Activated CD4-positive, alpha-beta memory T cell treated with anti-CD3 and anti-CD28 coated beads, Interleukin-2, amount 10 ng/mL, durations not matched to agents 7 days and 5 days (primary cell): ENCODE measurements at regions of chr5 and their contacts with region 1.

Region 1: GRCh38 chr5:43066799-43067741 is 27.0 kb upstream of the ANXA2R start:
- DNase-seq: peak; percentile 90
- H3K4me3 Mint-ChIP-seq: peak overlapping the region; percentile 97
- H3K27ac Mint-ChIP-seq: peak overlapping the region; percentile 100
- H3K4me1 Mint-ChIP-seq: peaks cover 47% of the 10 kb centered on the region
- H3K27me3 Mint-ChIP-seq: no peaks in the 10 kb centered on the region

Region 2: DNA sequence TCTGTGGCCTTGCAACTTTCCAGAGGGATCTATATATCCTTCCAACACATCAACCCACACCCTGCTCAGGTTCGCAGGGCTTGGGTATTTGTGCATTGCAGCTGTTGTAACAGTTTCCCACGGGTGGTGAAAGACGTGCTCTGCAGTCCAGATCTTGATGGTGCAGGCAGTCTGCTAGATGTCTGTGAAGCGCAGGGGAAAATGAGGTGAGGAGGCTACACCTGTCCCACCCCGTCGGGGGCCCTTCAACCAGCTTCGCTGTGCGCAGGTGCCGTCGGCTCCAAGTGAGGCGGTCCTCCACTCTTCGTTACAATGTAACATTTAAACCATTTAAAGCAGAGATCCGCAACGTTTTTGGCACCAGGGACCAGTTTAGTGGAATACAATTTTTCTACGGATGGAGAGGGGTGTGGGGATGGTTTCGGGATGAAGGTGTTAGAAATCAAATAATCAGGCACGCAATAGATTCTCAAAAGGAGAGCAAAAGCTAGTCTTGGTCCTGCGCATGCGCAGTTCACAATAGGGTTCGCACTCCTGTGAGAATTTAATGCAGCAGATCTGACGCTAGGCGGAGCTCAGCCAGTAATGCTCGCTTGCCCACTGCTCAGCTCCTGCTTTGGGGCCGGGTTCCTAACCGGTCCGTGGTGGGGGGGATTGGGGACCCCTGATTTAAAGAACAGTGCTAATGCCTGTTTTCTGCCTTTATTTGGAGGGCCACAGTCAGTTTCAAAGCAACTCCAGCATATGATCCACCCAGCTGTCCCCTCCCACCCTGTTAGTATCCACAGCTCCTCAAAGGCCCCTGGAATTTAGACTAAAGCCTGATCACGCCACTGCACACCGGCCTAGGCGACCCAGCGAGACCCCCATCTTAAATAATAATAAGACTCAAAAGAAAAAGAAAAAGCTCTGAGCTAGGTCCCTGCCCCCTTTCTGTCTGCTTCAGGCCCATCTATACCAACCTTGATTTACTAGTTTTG is 158.3 kb before region 1 on chr5:
- CTCF ChIA-PET with region 1: interaction called, 6 read pairs
- POLR2A ChIA-PET with region 1: interaction called, 19 read pairs
- DNase-seq: peak; percentile 91
- H3K4me3 Mint-ChIP-seq: peak overlapping the region; percentile 86
- H3K27ac Mint-ChIP-seq: peak overlapping the region; percentile 51
- H3K4me1 Mint-ChIP-seq: peaks cover 16% of the 10 kb centered on the region
- H3K27me3 Mint-ChIP-seq: peaks cover 33% of the 10 kb centered on the region

Region 3: DNA sequence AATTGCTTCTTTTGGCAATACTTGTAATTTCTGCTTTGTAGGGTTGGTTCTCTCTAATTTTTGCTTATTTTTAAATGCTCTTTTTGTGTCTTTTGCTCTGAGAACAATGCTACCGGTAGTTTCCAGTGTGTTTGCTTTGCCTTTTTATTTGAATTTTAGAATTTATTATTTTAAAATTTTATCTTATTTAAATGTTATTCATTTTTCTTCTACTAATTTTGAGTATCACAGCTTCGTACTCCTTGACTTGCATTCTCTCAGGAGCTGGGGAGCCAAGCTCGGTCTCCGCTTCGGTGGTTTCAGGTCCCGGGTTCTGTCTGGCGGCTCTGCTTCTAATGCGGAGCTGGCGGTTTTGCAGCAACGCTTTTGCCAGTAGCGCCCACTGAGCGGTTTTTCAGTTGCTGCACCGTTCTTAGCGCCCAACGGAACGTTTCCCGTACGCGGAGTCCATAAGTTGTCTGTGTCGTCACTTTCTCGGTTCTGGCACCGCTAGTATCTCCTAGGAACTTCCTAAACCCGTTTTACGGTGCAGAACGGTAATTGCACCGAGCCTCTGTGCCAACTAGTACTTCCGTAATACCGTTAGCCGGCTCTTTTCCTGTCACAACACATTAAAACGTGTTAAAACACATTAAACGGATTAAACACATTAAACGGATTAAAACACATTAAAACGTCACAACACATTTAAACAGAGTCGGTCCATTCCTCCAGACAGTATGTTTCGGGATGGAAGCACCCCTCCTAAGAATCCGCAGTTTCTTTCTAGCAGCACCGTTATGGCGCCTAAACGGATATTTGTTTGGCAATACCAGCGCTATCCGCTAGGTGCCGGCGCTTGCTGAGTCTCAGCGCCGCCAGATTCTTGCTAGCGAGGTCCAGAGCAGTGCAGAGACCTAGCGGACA is 72.6 kb before region 1 on chr5:
- CTCF ChIA-PET with region 1: interaction called, 11 read pairs
- POLR2A ChIA-PET with region 1: interaction called, 197 read pairs
- DNase-seq: peak; percentile 91
- H3K4me3 Mint-ChIP-seq: peak overlapping the region; percentile 99
- H3K27ac Mint-ChIP-seq: peak overlapping the region; percentile 100
- H3K4me1 Mint-ChIP-seq: peaks cover 25% of the 10 kb centered on the region
- H3K27me3 Mint-ChIP-seq: no peaks in the 10 kb centered on the region

Region 4: DNA sequence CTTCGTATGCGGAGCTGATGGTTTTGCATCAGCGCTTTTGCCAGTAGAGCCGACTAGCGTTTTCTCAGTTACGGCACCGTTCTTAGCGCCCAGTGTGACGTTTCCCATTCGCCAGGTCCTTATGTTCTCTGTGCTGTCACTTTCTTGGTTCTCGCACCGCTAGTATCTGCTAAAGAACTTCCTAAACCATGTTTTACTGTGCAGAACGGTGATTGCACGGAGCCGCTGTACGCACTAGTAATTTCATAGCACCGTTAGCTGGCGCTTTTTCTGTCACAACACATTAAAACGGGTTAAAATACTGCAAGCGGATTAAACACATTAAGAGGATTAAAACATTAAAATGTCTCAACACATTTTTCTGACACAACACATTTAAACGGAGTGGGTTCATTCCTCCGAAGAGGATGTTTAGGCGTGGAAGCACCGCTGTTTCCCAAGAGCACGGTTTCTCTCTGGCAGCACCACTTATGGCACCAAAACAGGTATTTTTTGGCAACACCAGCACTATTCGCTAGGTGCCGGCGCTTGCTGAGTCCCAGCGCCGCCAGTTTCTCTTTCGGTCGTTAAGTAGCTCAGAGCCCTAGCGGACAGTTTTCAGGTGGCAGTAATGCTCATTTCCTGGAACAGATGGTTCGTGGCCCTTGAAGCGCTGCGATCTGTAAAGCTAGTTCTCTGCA is 47.3 kb before region 1 on chr5:
- CTCF ChIA-PET with region 1: interaction called, 28 read pairs
- POLR2A ChIA-PET with region 1: interaction called, 158 read pairs
- DNase-seq: peak; percentile 90
- H3K4me3 Mint-ChIP-seq: peak overlapping the region; percentile 93
- H3K27ac Mint-ChIP-seq: peak overlapping the region; percentile 99
- H3K4me1 Mint-ChIP-seq: peaks cover 42% of the 10 kb centered on the region
- H3K27me3 Mint-ChIP-seq: no peaks in the 10 kb centered on the region

Region 5: DNA sequence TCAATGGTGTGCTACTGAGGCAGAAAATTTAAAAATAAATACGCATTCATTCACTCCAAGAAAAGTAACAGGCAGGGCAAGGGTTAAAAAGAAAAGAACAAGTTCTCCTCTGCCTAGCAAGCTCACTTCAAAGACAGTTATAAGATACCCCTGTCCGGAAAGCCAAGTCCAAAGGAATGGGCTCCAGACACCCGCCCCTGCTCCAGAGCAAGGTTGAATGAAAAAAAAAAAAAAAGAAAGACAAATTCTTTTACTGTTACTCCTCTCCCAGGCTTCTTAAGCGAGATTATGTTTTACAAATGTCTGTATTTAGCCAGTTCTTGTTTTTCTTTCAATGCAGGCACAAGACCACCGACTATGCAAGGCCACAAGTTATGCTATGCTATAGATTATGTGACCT is 17.8 kb before region 1 on chr5:
- CTCF ChIA-PET with region 1: interaction called, 76 read pairs
- POLR2A ChIA-PET with region 1: interaction called, 26 read pairs
- DNase-seq: no peak
- H3K4me3 Mint-ChIP-seq: no peak overlapping the region
- H3K27ac Mint-ChIP-seq: no peak overlapping the region
- H3K4me1 Mint-ChIP-seq: peaks cover 20% of the 10 kb centered on the region
- H3K27me3 Mint-ChIP-seq: no peaks in the 10 kb centered on the region

Region 6: GRCh38 chr5:43313035-43313853 is 246.2 kb after region 1 on chr5 and contains the start of gene HMGCS1:
- CTCF ChIA-PET with region 1: interaction called, 5 read pairs
- POLR2A ChIA-PET with region 1: interaction called, 19 read pairs
- DNase-seq: peak; percentile 99
- H3K4me3 Mint-ChIP-seq: peak within 1 kb of the TSS; percentile 99
- H3K27ac Mint-ChIP-seq: peak within 1 kb of the TSS; percentile 85
- H3K4me1 Mint-ChIP-seq: peaks cover 73% of the 10 kb centered on the region
- H3K27me3 Mint-ChIP-seq: no peaks in the 10 kb centered on the region
- total RNA-seq, gene HMGCS1: 150 to 155 TPM

Region 7: GRCh38 chr5:43543434-43543833 is 476.4 kb after region 1 on chr5:
- CTCF ChIA-PET with region 1: no interaction called
- POLR2A ChIA-PET with region 1: no interaction called
- DNase-seq: no peak
- H3K4me3 Mint-ChIP-seq: no peak overlapping the region
- H3K27ac Mint-ChIP-seq: no peak overlapping the region
- H3K4me1 Mint-ChIP-seq: peaks cover 11% of the 10 kb centered on the region
- H3K27me3 Mint-ChIP-seq: no peaks in the 10 kb centered on the region

Region 8: DNA sequence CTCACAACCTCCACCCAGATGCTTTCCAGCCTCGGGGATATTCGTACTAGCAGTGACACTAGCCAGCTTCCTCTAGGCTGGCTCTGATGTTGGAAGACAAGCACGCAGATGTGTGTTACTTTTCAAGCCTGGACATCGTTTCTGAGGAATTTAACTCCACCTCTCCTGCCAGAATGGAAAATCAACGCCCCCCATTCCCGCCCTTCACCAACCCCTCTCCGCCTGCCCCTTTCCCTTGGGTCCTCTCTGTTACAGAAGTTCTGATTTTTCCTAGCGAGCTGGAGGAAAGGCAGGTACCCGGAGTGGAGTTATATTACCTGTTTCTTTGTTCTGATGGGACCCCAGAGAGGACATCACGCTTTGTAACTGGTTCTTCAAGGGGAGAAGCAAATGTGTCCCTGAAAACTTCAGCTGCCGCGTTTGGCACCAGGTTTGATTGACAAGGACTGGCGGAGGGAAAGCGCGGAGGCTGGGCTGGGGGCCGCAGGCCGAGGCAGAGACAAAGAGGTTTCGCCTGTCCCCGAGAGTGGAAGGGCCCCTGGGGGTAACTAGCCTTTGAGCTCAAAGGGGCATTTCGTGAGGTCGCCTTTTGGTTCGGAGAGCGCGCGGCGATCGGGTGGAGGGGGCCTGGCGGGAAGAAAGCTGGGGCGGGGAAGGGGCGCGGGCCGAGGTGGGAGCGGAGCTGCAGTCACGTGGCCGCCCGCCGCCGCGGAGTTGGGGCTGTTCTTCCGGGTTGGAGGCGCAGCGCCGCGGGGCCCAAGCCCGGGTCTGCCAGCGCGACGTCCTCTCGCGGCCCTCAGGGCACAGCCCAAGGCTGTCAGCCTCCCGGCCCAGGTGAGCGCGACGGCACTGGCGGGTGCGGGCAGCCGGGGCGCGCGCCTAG is 535.6 kb after region 1 on chr5 and contains the start of gene NNT:
- CTCF ChIA-PET with region 1: no interaction called
- POLR2A ChIA-PET with region 1: interaction called, 15 read pairs
- DNase-seq: peak; percentile 84
- H3K4me3 Mint-ChIP-seq: peak within 1 kb of the TSS; percentile 91
- H3K27ac Mint-ChIP-seq: peak within 1 kb of the TSS; percentile 84
- H3K4me1 Mint-ChIP-seq: peaks cover 41% of the 10 kb centered on the region
- H3K27me3 Mint-ChIP-seq: no peaks in the 10 kb centered on the region
- total RNA-seq, gene NNT: 96.4 to 110 TPM

Region 9: GRCh38 chr5:43661102-43661501 is 594.0 kb after region 1 on chr5:
- CTCF ChIA-PET with region 1: no interaction called
- POLR2A ChIA-PET with region 1: no interaction called
- DNase-seq: no peak
- H3K4me3 Mint-ChIP-seq: no peak overlapping the region
- H3K27ac Mint-ChIP-seq: no peak overlapping the region
- H3K4me1 Mint-ChIP-seq: no peaks in the 10 kb centered on the region
- H3K27me3 Mint-ChIP-seq: no peaks in the 10 kb centered on the region

Region 10: DNA sequence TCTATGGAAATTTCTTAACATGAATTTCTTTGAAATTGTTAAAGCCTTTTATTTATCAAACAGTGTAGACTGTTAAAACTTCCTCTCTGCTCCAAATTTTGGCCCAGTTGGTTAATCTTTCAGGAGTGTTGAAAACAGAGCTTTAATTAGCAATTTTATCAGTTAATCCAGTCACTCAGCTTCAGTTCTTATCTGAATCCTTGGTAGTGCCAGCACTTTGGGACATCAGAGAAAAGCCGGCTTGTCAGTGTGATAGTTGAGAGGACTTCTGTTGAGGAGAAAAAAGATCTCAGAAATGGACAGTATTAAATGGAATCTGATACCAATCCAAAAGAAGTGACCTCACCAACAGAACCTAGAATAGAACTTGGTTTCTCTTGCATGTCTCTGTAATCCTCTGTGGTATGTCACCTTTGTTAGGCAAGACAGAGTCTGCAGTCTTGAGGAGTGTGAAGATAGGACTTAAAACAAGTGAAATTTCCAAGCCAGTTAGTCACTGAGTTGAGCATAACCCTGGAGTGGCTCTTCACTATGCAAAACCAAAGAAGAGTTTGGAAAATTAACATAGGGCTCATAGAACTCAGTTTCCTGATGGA is 787.7 kb after region 1 on chr5:
- CTCF ChIA-PET with region 1: no interaction called
- POLR2A ChIA-PET with region 1: no interaction called
- DNase-seq: no peak
- H3K4me3 Mint-ChIP-seq: no peak overlapping the region
- H3K27ac Mint-ChIP-seq: no peak overlapping the region
- H3K4me1 Mint-ChIP-seq: no peaks in the 10 kb centered on the region
- H3K27me3 Mint-ChIP-seq: no peaks in the 10 kb centered on the region